Panc1 (cell line): ENCODE measurements at regions of chr3 and their contacts with region 1.

Region 1: GRCh38 chr3:104723000-104723399 is 643.7 kb upstream of the ALCAM start:
- DNase-seq: no peak
- ATAC-seq: no peak
- H3K4me3 ChIP-seq: no peak overlapping the region
- H3K27ac ChIP-seq: no peak overlapping the region
- H3K4me1 ChIP-seq: no peaks in the 10 kb centered on the region
- H3K27me3 ChIP-seq: no peaks in the 10 kb centered on the region
- CTCF ChIP-seq: no peak

Region 2: DNA sequence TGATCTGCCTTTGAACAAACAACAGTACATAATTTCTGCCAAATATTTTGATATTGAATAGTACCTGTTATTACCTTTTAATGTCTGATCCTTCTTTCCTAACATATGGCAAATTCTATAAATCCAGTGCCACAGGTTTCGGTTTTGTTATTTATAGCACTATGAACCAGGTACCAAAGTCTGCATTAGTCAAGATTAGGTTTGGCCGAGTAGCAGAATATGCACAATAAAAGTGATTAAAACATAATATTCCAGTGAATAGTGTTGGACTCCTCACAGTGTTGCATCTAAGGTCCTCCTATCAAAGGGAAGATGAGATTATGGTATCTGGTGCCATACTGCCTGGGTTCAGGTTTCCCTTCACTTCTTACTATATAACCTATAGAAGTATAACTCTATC is 1689.2 kb before region 1 on chr3:
- CTCF ChIA-PET with region 1: no interaction called
- POLR2A ChIA-PET with region 1: interaction called, 10 read pairs
- in situ Hi-C with region 1: no loop called
- intact Hi-C with region 1: no loop called
- DNase-seq: no peak
- ATAC-seq: no peak
- H3K4me3 ChIP-seq: no peak overlapping the region
- H3K27ac ChIP-seq: no peak overlapping the region
- H3K4me1 ChIP-seq: no peaks in the 10 kb centered on the region
- H3K27me3 ChIP-seq: no peaks in the 10 kb centered on the region
- CTCF ChIP-seq: no peak

Region 3: GRCh38 chr3:105187344-105187743 is 464.3 kb after region 1 on chr3:
- CTCF ChIA-PET with region 1: no interaction called
- POLR2A ChIA-PET with region 1: no interaction called
- in situ Hi-C with region 1: no loop called
- intact Hi-C with region 1: no loop called
- DNase-seq: no peak
- ATAC-seq: no peak
- H3K4me3 ChIP-seq: no peak overlapping the region
- H3K27ac ChIP-seq: no peak overlapping the region
- H3K4me1 ChIP-seq: no peaks in the 10 kb centered on the region
- H3K27me3 ChIP-seq: no peaks in the 10 kb centered on the region
- CTCF ChIP-seq: no peak

Region 4: DNA sequence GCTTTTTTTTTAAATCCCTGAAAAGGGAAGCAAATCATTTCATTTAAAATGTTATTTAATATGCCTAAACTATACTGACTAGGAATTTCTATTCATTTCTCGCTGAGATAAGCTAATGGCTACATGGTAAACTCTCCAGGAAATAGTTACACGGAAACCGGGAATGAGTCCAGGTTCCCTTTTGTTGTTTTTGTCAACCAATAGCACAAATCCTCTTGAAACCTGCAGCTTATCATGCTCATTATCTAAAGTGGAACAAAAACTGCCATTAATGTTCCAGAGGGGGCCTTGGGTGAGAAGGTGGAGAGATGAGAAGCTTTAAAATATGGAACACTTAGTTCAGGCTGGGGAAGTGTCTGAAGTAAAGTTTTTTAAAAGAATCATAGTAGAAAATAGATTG is 530.2 kb after region 1 on chr3:
- CTCF ChIA-PET with region 1: no interaction called
- POLR2A ChIA-PET with region 1: no interaction called
- in situ Hi-C with region 1: no loop called
- intact Hi-C with region 1: no loop called
- DNase-seq: no peak
- ATAC-seq: no peak
- H3K4me3 ChIP-seq: no peak overlapping the region
- H3K27ac ChIP-seq: no peak overlapping the region
- H3K4me1 ChIP-seq: no peaks in the 10 kb centered on the region
- H3K27me3 ChIP-seq: no peaks in the 10 kb centered on the region
- CTCF ChIP-seq: no peak